OCI-LY7 (cell line): ENCODE measurements at regions of chr6 and their contacts with region 1.

Region 1: GRCh38 chr6:148464319-148465010 is 121.8 kb downstream of the SASH1 start:
- DNase-seq: peak; percentile 63
- H3K4me3 ChIP-seq: no peak overlapping the region
- H3K27ac ChIP-seq: no peak overlapping the region
- H3K4me1 ChIP-seq: no peaks in the 10 kb centered on the region
- CTCF ChIP-seq: peak; percentile 99

Region 2: DNA sequence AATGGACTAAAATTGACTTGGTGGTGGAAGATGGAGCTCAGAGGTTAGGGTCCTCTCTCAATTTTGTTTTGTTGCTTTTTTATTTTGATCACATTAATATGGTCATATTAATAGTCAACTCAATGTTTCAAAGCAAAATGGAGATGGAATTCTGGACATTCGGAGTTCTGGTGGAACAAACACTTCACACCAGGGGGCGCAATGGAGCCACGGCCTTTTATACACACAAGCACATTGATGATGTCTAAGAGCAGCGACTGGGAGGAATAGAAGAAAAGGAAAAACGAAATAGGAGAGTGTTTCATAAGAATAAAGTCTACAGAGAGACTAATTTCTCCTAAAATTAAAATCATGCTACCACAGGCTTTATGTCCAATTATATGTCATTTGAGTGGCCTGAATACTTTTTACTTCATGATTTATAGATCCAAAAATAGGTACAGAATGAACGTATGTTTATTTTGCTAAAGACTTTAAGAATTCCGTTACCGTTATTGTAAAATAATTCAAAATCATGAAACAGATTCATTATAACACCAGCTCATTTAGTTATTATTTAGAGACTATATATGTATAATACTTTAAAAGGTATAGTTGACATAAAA is 319.4 kb before region 1 on chr6:
- CTCF ChIA-PET with region 1: no interaction called
- POLR2A ChIA-PET with region 1: no interaction called
- intact Hi-C with region 1: loop called (anchors 10 kb)
- DNase-seq: peak; percentile 64
- H3K4me3 ChIP-seq: no peak overlapping the region
- H3K27ac ChIP-seq: no peak overlapping the region
- H3K4me1 ChIP-seq: peaks cover 5% of the 10 kb centered on the region
- CTCF ChIP-seq: peak; percentile 98

Region 3: GRCh38 chr6:148177589-148178233 is 286.8 kb before region 1 on chr6:
- CTCF ChIA-PET with region 1: no interaction called
- POLR2A ChIA-PET with region 1: no interaction called
- intact Hi-C with region 1: loop called (anchors 2 kb)
- DNase-seq: peak; percentile 6
- H3K4me3 ChIP-seq: no peak overlapping the region
- H3K27ac ChIP-seq: no peak overlapping the region
- H3K4me1 ChIP-seq: no peaks in the 10 kb centered on the region
- CTCF ChIP-seq: peak; percentile 76

Region 4: DNA sequence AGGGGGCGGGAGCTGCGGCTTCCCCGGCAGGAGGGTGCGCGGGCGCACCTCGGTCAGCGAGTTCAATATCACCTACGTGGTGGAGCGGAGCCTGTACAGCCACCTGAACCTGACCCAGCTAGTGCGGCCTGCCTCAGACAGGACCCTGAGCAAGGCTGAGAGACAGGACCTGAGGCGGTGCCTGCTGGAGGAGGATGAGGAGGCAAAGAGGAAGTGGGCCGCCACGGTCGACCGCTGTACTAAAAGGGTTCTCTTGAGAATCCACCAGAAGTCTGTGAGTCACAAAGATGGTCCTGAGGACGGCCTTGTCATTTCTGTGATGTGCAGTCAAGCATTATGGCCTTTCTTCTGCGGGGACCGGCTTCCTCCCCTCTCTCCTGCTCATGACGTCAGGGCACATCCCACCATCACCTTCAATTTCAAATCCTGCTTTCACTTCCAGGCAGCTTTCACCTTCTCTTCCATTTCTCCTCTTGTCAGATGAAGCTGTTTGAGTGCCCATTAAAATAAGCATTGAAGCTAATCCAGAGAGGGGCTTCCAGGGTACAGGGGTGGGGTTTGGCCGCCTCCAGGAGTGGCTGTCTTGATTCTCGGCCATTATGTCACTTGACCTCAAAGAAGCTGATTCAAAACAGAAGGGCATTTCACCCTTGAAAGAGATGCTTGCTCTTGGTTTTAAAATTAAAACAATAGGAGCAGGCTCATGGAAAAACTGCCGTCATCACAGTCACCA is 55.8 kb after region 1 on chr6:
- CTCF ChIA-PET with region 1: no interaction called
- POLR2A ChIA-PET with region 1: no interaction called
- intact Hi-C with region 1: loop called (anchors 2 kb)
- DNase-seq: peak; percentile 85
- H3K4me3 ChIP-seq: peak overlapping the region; percentile 53
- H3K27ac ChIP-seq: peak overlapping the region; percentile 35
- H3K4me1 ChIP-seq: peaks cover 30% of the 10 kb centered on the region
- CTCF ChIP-seq: no peak